ENCODE measurements at regions of chr6 and their contacts with region 1.

Region 1: GRCh38 chr6:33172688-33173534 is 19.4 kb downstream of the COL11A2 start:
- DNase-seq: peak in 1 of 2 experiments; percentile 72
- H3K4me3 ChIP-seq: no peak overlapping the region
- H3K27ac ChIP-seq: no peak overlapping the region
- H3K4me1 ChIP-seq: no peaks in the 10 kb centered on the region; a peak in 2 of 7 replicates
- H3K27me3 ChIP-seq: no peaks in the 10 kb centered on the region
- CTCF ChIP-seq: peak in 2 of 3 experiments; percentile 87 to 93; a peak in 3 of 4 replicates
- EP300 ChIP-seq: no peak
- POLR2A ChIP-seq: no peak
- RAD21 ChIP-seq: peak; percentile 93 to 97

Region 2: DNA sequence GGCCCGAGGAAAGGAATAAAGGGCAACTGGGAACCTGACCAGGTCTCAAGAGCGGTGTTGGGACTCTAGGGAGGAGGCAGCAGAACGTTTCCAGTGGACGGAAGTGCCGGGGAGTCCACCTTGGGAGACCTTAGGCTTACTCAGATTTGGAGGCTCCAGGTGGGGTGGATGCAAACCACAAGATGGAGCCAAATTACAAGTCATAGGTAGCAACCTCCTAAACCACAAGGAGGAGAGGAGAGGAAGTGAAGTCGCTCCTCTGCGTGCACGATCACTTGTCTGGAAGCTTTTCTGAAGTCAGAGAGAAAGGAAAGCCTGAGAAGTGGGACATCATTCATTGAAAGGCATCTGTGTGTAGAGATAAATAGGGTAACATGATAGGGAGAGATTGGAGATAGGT is 172.9 kb before region 1 on chr6:
- CTCF ChIA-PET with region 1: interaction called, 45 read pairs
- POLR2A ChIA-PET with region 1: interaction called, 3 read pairs
- DNase-seq: peak in 1 of 2 experiments; percentile 41
- H3K4me3 ChIP-seq: no peak overlapping the region
- H3K27ac ChIP-seq: no peak overlapping the region
- H3K4me1 ChIP-seq: no peaks in the 10 kb centered on the region
- H3K27me3 ChIP-seq: peaks cover 0 to 2% (median 0%) of the 10 kb centered on the region in 4 experiments; a peak in 2 of 7 replicates
- CTCF ChIP-seq: peak; percentile 46 to 93 (median 91)
- EP300 ChIP-seq: no peak
- POLR2A ChIP-seq: no peak
- RAD21 ChIP-seq: peak; percentile 96 to 97

Region 3: DNA sequence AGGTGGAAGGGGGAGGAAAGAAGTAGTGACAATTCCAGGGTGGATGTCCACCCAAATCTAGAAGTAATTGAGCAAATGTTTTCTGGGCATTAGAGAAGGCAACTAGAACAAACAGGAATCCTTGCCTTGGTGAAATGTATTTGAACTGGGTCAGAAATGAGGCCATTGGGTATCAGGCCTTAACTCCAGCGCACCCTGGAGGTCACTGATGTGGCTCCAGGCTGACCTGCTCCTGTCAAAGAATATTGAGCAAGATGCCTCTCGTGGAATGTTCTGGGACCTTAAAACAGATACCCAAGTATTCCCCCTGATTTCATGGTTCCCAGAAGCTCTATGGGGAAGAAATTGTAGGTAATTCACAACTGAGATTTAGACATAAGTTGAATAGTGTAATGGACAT is 90.2 kb before region 1 on chr6:
- CTCF ChIA-PET with region 1: interaction called, 12 read pairs
- POLR2A ChIA-PET with region 1: no interaction called
- DNase-seq: peak in 1 of 2 experiments; percentile 65
- H3K4me3 ChIP-seq: no peak overlapping the region
- H3K27ac ChIP-seq: no peak overlapping the region
- H3K4me1 ChIP-seq: peaks cover 2 to 8% (median 5%) of the 10 kb centered on the region in 4 experiments; a peak in 6 of 7 replicates
- H3K27me3 ChIP-seq: peaks cover 0 to 8% (median 3%) of the 10 kb centered on the region in 4 experiments; a peak in 4 of 7 replicates
- CTCF ChIP-seq: peak; percentile 81 to 86 (median 84)
- EP300 ChIP-seq: no peak
- POLR2A ChIP-seq: no peak
- RAD21 ChIP-seq: peak; percentile 74 to 82

Region 4: DNA sequence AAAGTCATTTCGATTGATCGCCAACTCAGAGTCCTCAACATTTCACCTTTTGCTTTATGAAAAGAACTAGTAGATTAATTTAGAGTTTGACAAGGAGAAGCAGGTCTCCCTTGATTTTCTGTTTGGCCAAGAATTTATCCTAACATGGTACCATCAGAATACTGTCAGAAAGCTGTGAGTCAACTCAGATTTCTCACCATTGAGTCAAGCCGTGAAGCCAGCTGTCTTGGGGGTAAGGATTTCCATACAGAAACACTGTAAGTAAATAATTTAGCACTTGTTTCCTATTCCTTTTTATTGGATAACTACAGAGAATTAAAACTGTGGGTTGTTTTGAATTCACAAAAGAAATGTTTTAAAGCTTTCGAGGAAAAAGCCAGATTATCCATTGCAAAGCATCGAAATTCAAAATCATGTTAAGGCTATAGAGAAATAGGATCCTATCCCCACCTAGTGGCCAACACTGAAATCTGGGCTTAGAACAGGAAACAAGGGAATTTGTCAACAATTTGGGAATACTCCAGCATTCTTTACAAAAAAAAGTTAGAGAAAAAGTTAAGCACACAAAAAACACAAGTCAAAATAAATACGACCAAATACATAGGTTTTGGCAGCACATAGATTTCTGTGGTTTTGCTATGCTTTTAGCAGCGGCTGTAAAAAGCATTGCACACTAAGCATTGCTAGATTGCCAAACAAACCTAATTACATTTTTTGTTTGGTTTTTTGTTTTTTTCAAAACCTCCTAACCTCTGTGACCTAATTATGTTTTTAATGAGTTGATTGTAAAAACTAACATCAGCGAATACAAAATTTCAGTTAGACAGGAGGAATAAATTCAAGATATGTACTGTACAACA is 24.9 kb before region 1 on chr6:
- CTCF ChIA-PET with region 1: interaction called, 37 read pairs
- POLR2A ChIA-PET with region 1: interaction called, 3 read pairs
- DNase-seq: no peak
- H3K4me3 ChIP-seq: no peak overlapping the region
- H3K27ac ChIP-seq: no peak overlapping the region
- H3K4me1 ChIP-seq: peaks cover 0 to 2% (median 0%) of the 10 kb centered on the region in 4 experiments; a peak in 1 of 7 replicates
- H3K27me3 ChIP-seq: no peaks in the 10 kb centered on the region
- CTCF ChIP-seq: peak in 2 of 3 experiments; percentile 61 to 72; a peak in 3 of 4 replicates
- EP300 ChIP-seq: no peak
- POLR2A ChIP-seq: no peak
- RAD21 ChIP-seq: peak; percentile 75 to 80

Region 5: DNA sequence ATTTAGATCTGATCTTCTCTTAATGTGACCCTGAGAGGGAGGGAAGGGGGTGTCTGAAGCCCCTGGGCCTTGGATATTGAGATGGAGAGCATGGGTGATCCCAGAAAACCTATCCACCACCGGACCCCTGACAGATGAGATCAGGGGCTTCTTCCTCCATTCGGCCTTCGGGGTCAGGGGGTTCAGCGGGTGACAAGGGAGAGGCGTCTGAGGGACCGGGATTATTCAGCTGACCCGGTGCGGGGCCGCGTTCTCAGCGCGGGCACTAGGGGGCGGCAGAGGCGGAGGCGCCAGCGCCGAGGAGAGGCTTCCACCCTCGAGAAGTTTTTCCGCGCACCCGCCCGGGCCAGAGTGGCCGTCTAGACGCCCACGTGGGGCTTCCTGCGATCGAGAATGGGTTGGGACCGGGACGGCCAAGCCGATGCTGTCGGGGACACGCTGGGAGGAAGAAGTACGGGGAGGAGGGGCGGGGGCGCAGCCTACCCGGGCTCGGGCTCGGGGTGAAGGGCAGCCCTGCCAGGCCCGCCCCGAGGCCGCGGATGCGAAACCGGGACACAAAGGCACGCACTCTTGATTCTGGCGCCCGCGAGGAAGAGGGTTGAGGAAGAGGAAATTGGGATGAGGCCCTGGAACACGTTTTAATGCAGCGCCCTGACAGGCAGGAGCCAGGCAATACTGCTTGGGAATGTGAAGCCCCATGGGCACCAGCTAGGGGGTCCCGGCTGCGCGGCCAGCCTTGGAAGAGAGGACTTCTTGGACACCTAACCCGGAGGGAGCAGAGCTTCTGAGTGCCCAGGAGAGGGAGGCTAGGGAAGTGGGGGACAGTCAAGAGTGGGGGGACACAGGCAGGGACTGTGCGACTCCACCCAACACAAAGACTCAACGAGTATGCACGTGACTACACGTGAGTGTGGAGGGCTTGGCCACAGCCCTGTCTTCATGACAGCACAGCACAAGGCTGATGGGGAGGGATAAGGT is 11.3 kb before region 1 on chr6:
- CTCF ChIA-PET with region 1: interaction called, 74 read pairs
- POLR2A ChIA-PET with region 1: no interaction called
- DNase-seq: peak in 1 of 2 experiments; percentile 97
- H3K4me3 ChIP-seq: peak overlapping the region; percentile 42 to 74 (median 62)
- H3K27ac ChIP-seq: no peak overlapping the region
- H3K4me1 ChIP-seq: peaks cover 0 to 6% (median 2%) of the 10 kb centered on the region in 4 experiments; a peak in 6 of 7 replicates
- H3K27me3 ChIP-seq: peaks cover 0 to 8% (median 2%) of the 10 kb centered on the region in 4 experiments; a peak in 4 of 7 replicates
- CTCF ChIP-seq: peak in 2 of 3 experiments; percentile 82 to 88; a peak in 3 of 4 replicates
- EP300 ChIP-seq: no peak
- POLR2A ChIP-seq: no peak
- RAD21 ChIP-seq: peak; percentile 48 to 63; a peak in 3 of 4 replicates

Region 6: GRCh38 chr6:33190504-33191107 is 17.7 kb after region 1 on chr6:
- CTCF ChIA-PET with region 1: interaction called, 11 read pairs
- POLR2A ChIA-PET with region 1: interaction called, 3 read pairs
- DNase-seq: no peak
- H3K4me3 ChIP-seq: no peak overlapping the region
- H3K27ac ChIP-seq: no peak overlapping the region
- H3K4me1 ChIP-seq: peaks cover 0 to 8% (median 7%) of the 10 kb centered on the region in 4 experiments; a peak in 6 of 7 replicates
- H3K27me3 ChIP-seq: peaks cover 0 to 17% (median 15%) of the 10 kb centered on the region in 4 experiments; a peak in 6 of 7 replicates
- CTCF ChIP-seq: no peak
- EP300 ChIP-seq: no peak
- POLR2A ChIP-seq: no peak
- RAD21 ChIP-seq: no peak